BJ (cell line): ENCODE measurements at regions of chr6 and their contacts with region 1.

Region 1: GRCh38 chr6:30238174-30238795 is 25.1 kb upstream of the TRIM26 start:
- DNase-seq: no peak
- H3K4me3 ChIP-seq: no peak overlapping the region
- H3K27me3 ChIP-seq: no peaks in the 10 kb centered on the region; the same call in 1 of the 2 replicates
- CTCF ChIP-seq: peak; percentile 48

Region 2: GRCh38 chr6:30175765-30176164 is 62.5 kb before region 1 on chr6:
- CTCF ChIA-PET with region 1: no interaction called
- POLR2A ChIA-PET with region 1: no interaction called
- DNase-seq: no peak
- H3K4me3 ChIP-seq: no peak overlapping the region
- H3K27me3 ChIP-seq: peaks cover 21% of the 10 kb centered on the region
- CTCF ChIP-seq: no peak

Region 3: DNA sequence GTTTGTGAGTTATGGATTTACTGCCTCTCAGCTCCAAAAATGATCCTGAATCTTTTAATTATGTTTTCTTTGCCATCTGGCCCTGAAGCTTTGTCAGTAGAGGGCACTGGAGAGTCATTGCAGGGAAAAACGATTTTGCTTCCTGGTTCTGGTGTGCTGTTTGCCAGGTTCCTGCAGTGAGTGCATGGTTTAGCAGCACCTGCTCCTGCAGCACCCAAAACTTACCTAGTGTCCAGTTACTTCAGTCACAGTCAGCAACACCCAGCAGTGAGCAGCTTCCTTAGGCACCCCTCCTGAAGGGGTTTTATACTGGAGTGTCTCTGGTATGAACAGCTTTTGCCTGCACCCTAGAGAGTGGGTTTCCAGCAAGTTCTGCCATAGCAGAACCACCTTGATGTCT is 19.0 kb before region 1 on chr6:
- CTCF ChIA-PET with region 1: interaction called, 14 read pairs
- POLR2A ChIA-PET with region 1: no interaction called
- DNase-seq: no peak
- H3K4me3 ChIP-seq: no peak overlapping the region
- H3K27me3 ChIP-seq: no peaks in the 10 kb centered on the region; the same call in none of the 2 replicates
- CTCF ChIP-seq: peak; percentile 93

Region 4: DNA sequence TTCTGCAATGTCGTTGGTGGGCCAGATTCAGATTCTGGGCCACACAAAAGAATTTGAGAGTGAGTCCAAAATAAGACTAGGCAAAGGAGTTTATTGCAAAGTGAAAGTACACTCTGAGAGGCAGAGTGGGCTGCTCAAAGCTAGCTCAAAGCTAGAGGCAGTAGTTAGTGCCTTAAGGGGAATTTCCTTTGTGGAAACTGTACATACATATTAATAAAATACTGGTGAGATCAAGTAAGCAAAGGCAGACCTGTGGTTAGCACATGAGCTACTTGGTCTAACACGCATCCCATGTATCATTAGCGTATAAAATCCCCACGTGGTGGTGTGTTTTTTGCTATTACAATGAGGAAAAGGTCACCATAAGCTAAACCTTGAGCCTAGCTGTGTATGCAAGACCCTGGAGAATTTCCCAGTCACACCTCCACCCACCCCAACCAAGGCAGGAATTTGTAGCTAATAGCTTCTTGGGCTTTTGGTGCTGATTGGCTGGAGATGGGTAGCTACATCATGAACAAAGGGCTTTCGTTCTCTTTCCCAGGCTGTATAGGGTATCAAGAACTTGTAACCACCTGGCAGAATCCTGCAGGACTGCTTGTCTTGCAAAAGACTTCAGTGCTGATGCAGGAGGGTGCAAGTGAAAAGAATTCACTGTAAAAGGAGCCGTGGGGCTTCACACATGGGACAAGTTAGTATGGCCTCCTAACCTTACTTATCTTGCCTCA is 10.4 kb before region 1 on chr6:
- CTCF ChIA-PET with region 1: interaction called, 10 read pairs
- POLR2A ChIA-PET with region 1: no interaction called
- DNase-seq: no peak
- H3K4me3 ChIP-seq: no peak overlapping the region
- H3K27me3 ChIP-seq: peaks cover 4% of the 10 kb centered on the region
- CTCF ChIP-seq: no peak

Region 5: GRCh38 chr6:30304002-30304401 is 65.7 kb after region 1 on chr6:
- CTCF ChIA-PET with region 1: no interaction called
- POLR2A ChIA-PET with region 1: no interaction called
- DNase-seq: no peak
- H3K4me3 ChIP-seq: no peak overlapping the region
- H3K27me3 ChIP-seq: no peaks in the 10 kb centered on the region
- CTCF ChIP-seq: no peak